ENCODE measurements at regions of chr5 and their contacts with region 1.

Region 1: GRCh38 chr5:169089342-169089741 is 211.6 kb downstream of the SLIT3 start:
- DNase-seq: no peak
- ATAC-seq: no peak
- H3K4me3 Mint-ChIP-seq: no peak overlapping the region
- H3K27ac Mint-ChIP-seq: no peak overlapping the region
- H3K4me1 Mint-ChIP-seq: no peaks in the 10 kb centered on the region
- H3K27me3 Mint-ChIP-seq: no peaks in the 10 kb centered on the region

Region 2: GRCh38 chr5:168976311-168976970 is 112.9 kb before region 1 on chr5:
- CTCF ChIA-PET with region 1: no interaction called
- POLR2A ChIA-PET with region 1: no interaction called
- intact Hi-C with region 1: no loop called
- DNase-seq: no peak
- ATAC-seq: no peak
- H3K4me3 Mint-ChIP-seq: no peak overlapping the region
- H3K27ac Mint-ChIP-seq: no peak overlapping the region
- H3K4me1 Mint-ChIP-seq: peaks cover 2% of the 10 kb centered on the region
- H3K27me3 Mint-ChIP-seq: peaks cover 32% of the 10 kb centered on the region

Region 3: DNA sequence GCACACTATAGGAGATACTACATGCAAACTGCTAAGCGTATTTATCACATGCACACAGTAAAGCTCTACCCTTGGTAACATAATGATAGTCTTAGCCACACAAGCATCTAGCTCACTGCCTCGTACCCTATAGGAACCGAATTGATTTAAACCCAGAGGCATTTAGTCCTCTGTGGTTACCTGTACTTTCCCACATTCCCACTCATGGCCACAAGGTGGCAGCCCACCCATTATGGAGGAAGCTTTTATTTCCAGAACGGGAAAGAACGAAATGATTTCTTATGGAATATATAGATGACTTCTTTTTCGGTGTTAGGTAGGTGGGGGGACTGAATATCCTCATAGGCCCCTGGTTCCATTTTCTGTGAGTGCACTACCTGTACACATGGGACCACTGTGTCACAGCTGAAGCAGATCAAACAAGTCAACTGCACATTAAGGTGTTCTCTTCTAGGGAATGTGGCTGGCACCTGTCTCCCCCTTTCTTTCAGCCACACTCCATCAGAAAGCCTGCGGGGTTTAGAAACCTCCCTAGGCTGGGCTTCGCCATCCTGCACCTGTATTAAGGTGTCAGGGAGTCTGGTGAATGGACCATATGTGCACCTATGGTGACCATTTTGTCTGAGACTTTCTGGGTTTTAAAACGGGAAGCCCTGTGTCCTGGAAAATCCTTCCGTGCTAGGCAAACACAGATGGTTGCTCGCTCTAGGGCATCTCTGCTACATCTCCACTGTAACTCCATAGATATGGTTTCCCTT is 101.6 kb before region 1 on chr5:
- CTCF ChIA-PET with region 1: no interaction called
- POLR2A ChIA-PET with region 1: no interaction called
- intact Hi-C with region 1: loop called in 1 of 2 experiments (anchors 5 kb)
- DNase-seq: peak; percentile 79
- ATAC-seq: peak; percentile 63
- H3K4me3 Mint-ChIP-seq: no peak overlapping the region
- H3K27ac Mint-ChIP-seq: no peak overlapping the region
- H3K4me1 Mint-ChIP-seq: peaks cover 4% of the 10 kb centered on the region
- H3K27me3 Mint-ChIP-seq: peaks cover 9% of the 10 kb centered on the region

Region 4: GRCh38 chr5:169139480-169140050 is 50.2 kb after region 1 on chr5:
- CTCF ChIA-PET with region 1: no interaction called
- POLR2A ChIA-PET with region 1: no interaction called
- intact Hi-C with region 1: no loop called
- DNase-seq: no peak
- ATAC-seq: no peak
- H3K4me3 Mint-ChIP-seq: no peak overlapping the region
- H3K27ac Mint-ChIP-seq: no peak overlapping the region
- H3K4me1 Mint-ChIP-seq: no peaks in the 10 kb centered on the region
- H3K27me3 Mint-ChIP-seq: no peaks in the 10 kb centered on the region